A673 (cell line): ENCODE measurements at regions of chr5 and their contacts with region 1.

Region 1: DNA sequence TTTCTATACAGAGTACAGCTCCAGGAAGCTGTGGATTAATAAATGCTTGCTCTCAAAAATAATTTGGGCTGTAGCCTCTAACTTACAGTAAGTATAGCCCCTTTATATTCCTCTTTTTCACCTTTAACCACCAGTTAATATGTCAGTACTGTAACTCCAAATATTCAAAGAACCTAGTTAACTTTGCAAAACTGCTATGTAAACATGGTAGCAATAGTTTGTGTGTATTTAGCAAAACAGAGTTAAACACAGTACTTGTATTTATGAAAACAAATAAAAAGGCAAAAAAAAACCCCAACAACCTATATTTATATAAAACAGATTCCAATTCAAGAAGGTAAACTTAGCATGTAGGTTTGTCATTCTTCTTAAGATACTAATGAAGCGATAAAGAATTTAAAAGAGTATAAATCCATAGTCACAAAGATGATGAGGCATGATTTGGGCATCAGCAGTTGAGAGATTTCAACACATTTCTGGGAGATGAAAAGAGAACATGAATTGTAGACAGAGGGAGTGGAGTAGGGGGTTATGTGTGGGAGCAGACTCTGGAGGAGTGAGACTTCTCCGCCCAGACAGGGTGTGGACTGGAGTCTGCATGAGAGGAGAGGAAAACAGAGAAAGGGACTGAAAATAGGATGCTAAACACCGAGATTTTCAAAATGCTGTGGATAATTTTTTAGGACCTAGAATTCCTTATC is 47.0 kb upstream of the F2RL1 start:
- DNase-seq: no peak
- H3K4me3 ChIP-seq: no peak overlapping the region
- H3K27ac ChIP-seq: no peak overlapping the region
- H3K4me1 ChIP-seq: peaks cover 3% of the 10 kb centered on the region
- H3K27me3 ChIP-seq: no peaks in the 10 kb centered on the region
- CTCF ChIP-seq: no peak

Region 2: GRCh38 chr5:76402886-76403765 is 368.7 kb before region 1 on chr5 and contains the start of gene IQGAP2:
- CTCF ChIA-PET with region 1: interaction called, 3 read pairs
- POLR2A ChIA-PET with region 1: no interaction called
- intact Hi-C with region 1: loop called (anchors 10 kb)
- DNase-seq: peak; percentile 90
- H3K4me3 ChIP-seq: peak within 1 kb of the TSS; percentile 89
- H3K27ac ChIP-seq: peak within 1 kb of the TSS; percentile 87
- H3K4me1 ChIP-seq: peaks cover 25% of the 10 kb centered on the region
- H3K27me3 ChIP-seq: no peaks in the 10 kb centered on the region
- CTCF ChIP-seq: peak; percentile 85
- total RNA-seq, gene IQGAP2: 26.8 and 34.0 TPM in 2 replicates

Region 3: GRCh38 chr5:76601470-76601869 is 170.4 kb before region 1 on chr5:
- CTCF ChIA-PET with region 1: interaction called, 63 read pairs
- POLR2A ChIA-PET with region 1: no interaction called
- intact Hi-C with region 1: loop called (anchors 1 kb)
- DNase-seq: peak; percentile 85
- H3K4me3 ChIP-seq: no peak overlapping the region
- H3K27ac ChIP-seq: no peak overlapping the region
- H3K4me1 ChIP-seq: peaks cover 38% of the 10 kb centered on the region
- H3K27me3 ChIP-seq: no peaks in the 10 kb centered on the region
- CTCF ChIP-seq: peak; percentile 84

Region 4: GRCh38 chr5:76641514-76642120 is 130.2 kb before region 1 on chr5:
- CTCF ChIA-PET with region 1: interaction called, 6 read pairs
- POLR2A ChIA-PET with region 1: no interaction called
- intact Hi-C with region 1: loop called (anchors 5 kb)
- DNase-seq: peak; percentile 88
- H3K4me3 ChIP-seq: no peak overlapping the region
- H3K27ac ChIP-seq: no peak overlapping the region
- H3K4me1 ChIP-seq: peaks cover 6% of the 10 kb centered on the region
- H3K27me3 ChIP-seq: no peaks in the 10 kb centered on the region
- CTCF ChIP-seq: peak; percentile 94

Region 5: DNA sequence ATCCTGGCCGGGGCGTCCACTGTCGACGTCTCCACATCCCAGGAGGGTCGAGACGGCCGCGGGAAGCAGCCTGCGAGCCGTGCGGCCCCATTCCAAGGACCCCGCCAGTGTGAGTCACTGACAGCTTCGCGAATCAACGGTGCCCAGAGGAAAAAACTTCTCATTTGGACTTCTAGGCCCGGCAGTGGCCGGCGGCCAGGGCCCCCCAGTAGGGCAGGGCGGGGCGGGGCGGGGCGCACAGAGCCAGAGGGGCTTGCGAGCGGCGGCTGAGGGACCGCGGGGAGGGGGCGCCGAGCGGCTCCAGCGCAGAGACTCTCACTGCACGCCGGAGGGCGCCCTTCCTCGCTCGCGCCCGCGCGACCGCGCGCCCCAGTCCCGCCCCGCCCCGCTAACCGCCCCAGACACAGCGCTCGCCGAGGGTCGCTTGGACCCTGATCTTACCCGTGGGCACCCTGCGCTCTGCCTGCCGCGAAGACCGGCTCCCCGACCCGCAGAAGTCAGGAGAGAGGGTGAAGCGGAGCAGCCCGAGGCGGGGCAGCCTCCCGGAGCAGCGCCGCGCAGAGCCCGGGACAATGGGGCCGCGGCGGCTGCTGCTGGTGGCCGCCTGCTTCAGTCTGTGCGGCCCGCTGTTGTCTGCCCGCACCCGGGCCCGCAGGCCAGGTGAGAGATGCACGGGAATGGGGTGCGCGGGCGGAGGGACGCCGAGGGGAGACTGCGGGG is 56.0 kb before region 1 on chr5 and contains the start of gene F2R:
- CTCF ChIA-PET with region 1: interaction called, 5 read pairs
- POLR2A ChIA-PET with region 1: no interaction called
- intact Hi-C with region 1: loop called (anchors 1 kb)
- DNase-seq: peak; percentile 90
- H3K4me3 ChIP-seq: peak within 1 kb of the TSS; percentile 70
- H3K27ac ChIP-seq: peak within 1 kb of the TSS; percentile 90
- H3K4me1 ChIP-seq: peaks cover 33% of the 10 kb centered on the region
- H3K27me3 ChIP-seq: no peaks in the 10 kb centered on the region
- CTCF ChIP-seq: peak; percentile 57
- total RNA-seq, gene F2R: 83.3 and 92.1 TPM in 2 replicates

Region 6: DNA sequence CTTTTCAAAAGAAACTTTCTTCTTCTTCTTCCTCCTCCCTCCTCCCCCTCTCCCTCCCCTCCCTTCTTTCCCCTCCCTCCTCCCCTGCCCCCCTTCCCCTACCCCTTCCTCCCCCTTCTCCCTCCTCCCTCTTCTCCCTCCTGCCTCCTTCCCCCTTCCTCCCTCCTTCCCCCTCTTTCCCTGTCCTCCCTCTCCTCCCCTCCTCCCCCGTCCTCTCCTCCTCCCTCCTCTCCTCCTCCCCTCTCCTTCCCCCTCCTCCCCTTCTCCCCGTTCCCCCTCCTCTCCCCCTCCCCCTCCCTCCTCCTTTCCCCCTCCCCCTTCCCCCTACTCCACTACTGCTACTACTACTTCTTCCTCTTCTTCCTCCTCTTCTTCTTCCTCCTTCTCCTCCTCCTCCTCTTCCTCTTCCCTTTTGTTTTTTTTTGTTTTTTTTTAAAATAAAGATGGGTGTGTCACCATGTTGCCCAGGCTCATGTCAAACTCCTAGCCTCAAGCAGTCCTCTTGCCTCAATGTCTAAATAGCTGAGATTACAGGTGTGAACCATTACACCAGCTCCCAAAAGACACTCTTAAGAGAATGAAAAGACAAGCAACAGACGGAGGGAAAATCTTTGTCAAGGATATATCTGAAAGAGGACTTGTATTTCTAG is 1676.0 kb after region 1 on chr5:
- CTCF ChIA-PET with region 1: interaction called, 11 read pairs
- POLR2A ChIA-PET with region 1: no interaction called
- intact Hi-C with region 1: no loop called
- DNase-seq: no peak
- H3K4me3 ChIP-seq: no peak overlapping the region
- H3K27ac ChIP-seq: no peak overlapping the region
- H3K4me1 ChIP-seq: peaks cover 5% of the 10 kb centered on the region
- H3K27me3 ChIP-seq: no peaks in the 10 kb centered on the region
- CTCF ChIP-seq: no peak